Ascending aorta (tissue), 2 donors: ENCODE measurements at regions of chr22 and their contacts with region 1.

Region 1: GRCh38 chr22:18077639-18078328 is at the start of gene PEX26:
- DNase-seq: peak; percentile 87 to 98
- H3K4me3 ChIP-seq: peak within 1 kb of the TSS; percentile 73 to 93
- H3K27ac ChIP-seq: peak within 1 kb of the TSS; percentile 62 to 65
- H3K4me1 ChIP-seq: peaks cover 0 to 23% of the 10 kb centered on the region in 2 donors
- H3K27me3 ChIP-seq: no peaks in the 10 kb centered on the region
- CTCF ChIP-seq: no peak
- total RNA-seq, gene PEX26: 38.1 TPM

Region 2: GRCh38 chr22:17706018-17706900 is 371.5 kb before region 1 on chr22:
- intact Hi-C with region 1: loop called (anchors 10 kb)
- DNase-seq: peak; percentile 21 to 76
- H3K4me3 ChIP-seq: peak overlapping the region; percentile 42 to 59
- H3K27ac ChIP-seq: peak overlapping the region; percentile 65 to 67
- H3K4me1 ChIP-seq: no peaks in the 10 kb centered on the region
- H3K27me3 ChIP-seq: no peaks in the 10 kb centered on the region
- CTCF ChIP-seq: no peak

Region 3: GRCh38 chr22:17910561-17911311 is 167.0 kb before region 1 on chr22:
- intact Hi-C with region 1: loop called (anchors 2 kb)
- DNase-seq: peak; percentile 44 to 87
- H3K4me3 ChIP-seq: no peak overlapping the region
- H3K27ac ChIP-seq: peak overlapping the region; percentile 67 to 79
- H3K4me1 ChIP-seq: peaks cover 3 to 23% of the 10 kb centered on the region in 2 donors
- H3K27me3 ChIP-seq: no peaks in the 10 kb centered on the region
- CTCF ChIP-seq: peak in 2 of 3 experiments; percentile 34 to 49

Region 4: DNA sequence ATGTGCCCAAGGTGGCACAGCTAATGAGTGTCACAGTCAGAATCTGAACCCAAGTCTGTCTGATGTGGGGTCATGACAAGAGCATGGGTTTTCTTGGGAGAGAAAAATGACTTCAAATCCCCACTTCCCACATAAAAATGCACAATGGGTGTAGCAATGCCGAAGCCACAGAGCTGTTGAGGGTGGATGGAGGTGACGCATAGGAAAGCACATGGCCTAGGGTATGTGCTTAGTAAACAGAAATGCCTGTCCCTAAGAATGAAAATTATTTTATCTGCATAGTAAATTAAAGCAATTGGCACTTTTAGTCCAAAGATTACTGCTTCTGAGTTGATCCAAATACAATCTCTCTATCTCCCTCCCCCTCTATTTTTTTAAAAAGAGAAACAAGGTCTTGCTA is 64.3 kb before region 1 on chr22:
- intact Hi-C with region 1: no loop called
- DNase-seq: no peak
- H3K4me3 ChIP-seq: no peak overlapping the region
- H3K27ac ChIP-seq: no peak overlapping the region
- H3K4me1 ChIP-seq: no peaks in the 10 kb centered on the region
- H3K27me3 ChIP-seq: no peaks in the 10 kb centered on the region
- CTCF ChIP-seq: no peak

Region 5: GRCh38 chr22:18024276-18024947 is 53.4 kb before region 1 on chr22 and contains the start of gene MICAL3:
- intact Hi-C with region 1: loop called (anchors 1 kb)
- DNase-seq: peak in 1 of 2 donors; percentile 75
- H3K4me3 ChIP-seq: peak within 1 kb of the TSS; percentile 71 to 88
- H3K27ac ChIP-seq: peak within 1 kb of the TSS; percentile 69
- H3K4me1 ChIP-seq: peaks cover 0 to 3% of the 10 kb centered on the region in 2 donors
- H3K27me3 ChIP-seq: no peaks in the 10 kb centered on the region
- CTCF ChIP-seq: peak; percentile 26 to 62 (median 51)
- total RNA-seq, gene MICAL3: 36.9 TPM

Region 6: DNA sequence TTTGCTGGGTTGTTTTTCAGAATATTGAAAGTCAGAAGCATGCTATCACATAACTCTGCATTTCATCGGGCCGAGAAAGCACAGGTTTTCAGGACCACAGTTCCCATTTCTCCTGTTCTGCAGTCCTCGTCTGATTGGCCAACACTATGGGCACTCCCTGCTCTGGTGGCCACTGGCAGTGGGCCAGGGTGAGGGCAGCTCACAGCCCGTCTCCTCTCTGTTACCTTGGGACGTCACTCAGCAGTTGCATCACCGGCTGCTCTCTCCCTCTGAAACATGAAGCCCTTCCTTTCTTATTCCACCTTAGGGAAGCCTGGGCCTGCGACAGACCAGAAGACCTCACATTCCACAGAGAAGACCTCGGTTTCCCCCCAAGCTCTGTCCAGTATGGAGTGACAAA is 42.0 kb before region 1 on chr22:
- intact Hi-C with region 1: no loop called
- DNase-seq: no peak
- H3K4me3 ChIP-seq: no peak overlapping the region
- H3K27ac ChIP-seq: no peak overlapping the region
- H3K4me1 ChIP-seq: peaks cover 0 to 10% of the 10 kb centered on the region in 2 donors
- H3K27me3 ChIP-seq: no peaks in the 10 kb centered on the region
- CTCF ChIP-seq: no peak